Heart left ventricle (tissue), 16 donors: ENCODE measurements at regions of chr4 and their contacts with region 1.

Region 1: DNA sequence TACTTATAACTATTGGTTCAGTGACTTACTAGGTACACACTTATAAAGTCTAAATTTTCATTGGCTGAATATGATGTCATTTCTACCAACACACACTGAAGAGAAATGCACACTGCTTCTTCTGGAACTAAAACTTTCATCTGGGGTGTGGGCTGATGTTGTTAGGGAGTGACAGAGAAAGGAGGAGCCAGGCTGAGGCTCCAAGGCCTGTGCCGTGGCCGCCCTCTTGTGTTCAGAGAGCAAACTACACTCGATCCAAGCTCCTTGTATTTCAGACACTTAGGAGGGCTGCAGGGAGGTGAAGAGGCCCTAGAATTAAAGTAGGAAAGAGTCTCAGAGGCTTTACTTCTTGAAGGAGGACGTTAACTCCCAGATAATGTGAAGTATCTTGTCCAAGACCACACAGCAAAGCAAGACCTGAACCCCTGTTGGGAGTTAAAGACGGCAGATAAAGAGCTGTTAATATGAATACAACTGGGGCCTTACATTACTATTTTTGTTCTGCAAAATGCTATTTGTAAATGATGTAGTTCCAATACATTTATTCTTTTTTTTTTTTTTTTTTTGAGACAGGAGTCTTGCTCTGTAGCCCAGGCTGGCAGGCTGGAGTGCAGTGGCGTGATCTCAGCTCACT is 137.5 kb downstream of the AFAP1 start:
- DNase-seq: peak in 4 of 5 donors; percentile 72 to 82 (median 80)
- ATAC-seq: peak; percentile 39 to 68 (median 50)
- H3K4me3 ChIP-seq: no peak overlapping the region
- H3K27ac ChIP-seq: no peak overlapping the region
- H3K4me1 ChIP-seq: peaks cover 0 to 42% (median 29%) of the 10 kb centered on the region in 12 donors
- H3K27me3 ChIP-seq: no peaks in the 10 kb centered on the region
- CTCF ChIP-seq: peak; percentile 87 to 96 (median 94)
- POLR2A ChIP-seq: no peak

Region 2: GRCh38 chr4:7761720-7762119 is 40.5 kb before region 1 on chr4:
- intact Hi-C with region 1: loop called (anchors 1 to 5 kb)
- DNase-seq: peak; percentile 72 to 89 (median 78)
- ATAC-seq: peak; percentile 68 to 87 (median 78)
- H3K4me3 ChIP-seq: no peak overlapping the region
- H3K27ac ChIP-seq: peak overlapping the region in 2 of 12 donors; percentile 8 to 48
- H3K4me1 ChIP-seq: peaks cover 0 to 22% (median 11%) of the 10 kb centered on the region in 12 donors
- H3K27me3 ChIP-seq: no peaks in the 10 kb centered on the region
- CTCF ChIP-seq: peak; percentile 69 to 92 (median 82)
- POLR2A ChIP-seq: no peak

Region 3: GRCh38 chr4:7831330-7831729 is 29.1 kb after region 1 on chr4:
- intact Hi-C with region 1: loop called in 1 of 10 experiments (anchors 2 kb)
- DNase-seq: peak in 4 of 5 donors; percentile 43 to 62 (median 52)
- ATAC-seq: peak; percentile 47 to 73 (median 58)
- H3K4me3 ChIP-seq: peak overlapping the region in 2 of 12 donors; percentile 17
- H3K27ac ChIP-seq: peak overlapping the region; percentile 11 to 96 (median 69)
- H3K4me1 ChIP-seq: peaks cover 0 to 50% (median 36%) of the 10 kb centered on the region in 12 donors
- H3K27me3 ChIP-seq: no peaks in the 10 kb centered on the region
- CTCF ChIP-seq: no peak
- POLR2A ChIP-seq: no peak

Region 4: GRCh38 chr4:7939377-7940108 is 137.3 kb after region 1 on chr4 and contains the start of gene AFAP1:
- intact Hi-C with region 1: loop called in 2 of 10 experiments (anchors 5 kb)
- DNase-seq: peak; percentile 89 to 95 (median 92)
- ATAC-seq: peak; percentile 91 to 98 (median 96)
- H3K4me3 ChIP-seq: peak within 1 kb of the TSS; percentile 68 to 97 (median 84)
- H3K27ac ChIP-seq: peak within 1 kb of the TSS; percentile 39 to 96 (median 89)
- H3K4me1 ChIP-seq: peaks cover 0 to 30% (median 11%) of the 10 kb centered on the region in 12 donors
- H3K27me3 ChIP-seq: peaks cover 0 to 12% (median 0%) of the 10 kb centered on the region in 9 donors
- CTCF ChIP-seq: no peak
- POLR2A ChIP-seq: peak in 1 of 2 donors; percentile 73
- total RNA-seq, gene AFAP1: 4.5 to 18.0 (median 7.0) TPM

Region 5: GRCh38 chr4:8198906-8199593 is 396.8 kb after region 1 on chr4 and contains the start of gene SH3TC1:
- intact Hi-C with region 1: loop called in 1 of 10 experiments (anchors 10 kb)
- DNase-seq: peak; percentile 90 to 94 (median 93)
- ATAC-seq: peak; percentile 84 to 93 (median 92)
- H3K4me3 ChIP-seq: peak within 1 kb of the TSS; percentile 14 to 71 (median 52)
- H3K27ac ChIP-seq: peak within 1 kb of the TSS; percentile 4 to 95 (median 79)
- H3K4me1 ChIP-seq: peaks cover 0 to 73% (median 51%) of the 10 kb centered on the region in 12 donors
- H3K27me3 ChIP-seq: no peaks in the 10 kb centered on the region
- CTCF ChIP-seq: no peak
- POLR2A ChIP-seq: peak in 1 of 2 donors; percentile 67
- total RNA-seq, gene SH3TC1: 6.0 to 45.9 (median 11.5) TPM